Head of caudate nucleus (tissue), 42 donors: ENCODE measurements at regions of chr1 and their contacts with region 1.

Region 1: GRCh38 chr1:24930204-24931145 is at the start of gene RUNX3:
- DNase-seq: peak in 25 of 42 donors; percentile 9 to 64 (median 39)

Region 2: GRCh38 chr1:25006770-25007169 is 76.3 kb after region 1 on chr1:
- intact Hi-C with region 1: no loop called
- DNase-seq: peak in 11 of 42 donors; percentile 6 to 49 (median 22)

Region 3: GRCh38 chr1:25103164-25103795 is 172.8 kb after region 1 on chr1:
- intact Hi-C with region 1: loop called (anchors 10 kb)
- DNase-seq: no peak